ENCODE measurements at regions of chr16 and their contacts with region 1.

Region 1: DNA sequence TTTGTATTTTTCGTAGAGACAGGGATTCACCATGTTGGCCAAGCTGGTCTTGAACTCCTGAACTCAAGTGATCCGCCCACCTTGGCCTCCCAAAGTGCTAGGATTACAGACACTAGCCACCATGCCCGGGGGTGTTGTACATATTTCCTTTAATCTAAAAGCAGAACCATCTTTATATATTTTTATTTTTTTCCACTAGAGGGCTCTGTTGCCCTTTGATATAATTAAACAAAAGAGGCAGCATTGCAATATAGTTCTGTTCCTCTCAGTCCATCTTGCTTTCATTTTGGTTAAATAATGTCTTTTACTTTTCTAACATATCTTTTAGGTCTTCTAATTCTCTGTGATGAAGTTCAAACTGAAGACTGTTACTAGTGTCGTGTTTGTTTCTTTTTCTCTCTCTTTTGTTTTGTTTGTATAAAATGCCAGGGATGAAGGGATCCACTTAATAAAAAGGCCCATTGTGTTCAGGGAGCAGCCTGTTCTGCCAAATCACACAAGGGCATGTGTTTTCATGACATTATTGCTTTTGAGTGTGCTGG is 23.4 kb downstream of the WWOX start:
- DNase-seq: no peak
- H3K4me3 ChIP-seq: peak overlapping the region in 1 of 2 donors; percentile 6
- H3K27ac ChIP-seq: no peak overlapping the region
- H3K4me1 ChIP-seq: peaks cover 16% of the 10 kb centered on the region
- H3K27me3 ChIP-seq: no peaks in the 10 kb centered on the region
- CTCF ChIP-seq: peak; percentile 54 to 69 (median 58)
- POLR2A ChIP-seq: no peak

Region 2: GRCh38 chr16:78235168-78235800 is 112.4 kb after region 1 on chr16:
- intact Hi-C with region 1: loop called (anchors 10 kb)
- DNase-seq: no peak
- H3K4me3 ChIP-seq: no peak overlapping the region
- H3K27ac ChIP-seq: no peak overlapping the region
- H3K4me1 ChIP-seq: peaks cover 21% of the 10 kb centered on the region
- H3K27me3 ChIP-seq: no peaks in the 10 kb centered on the region
- CTCF ChIP-seq: peak; percentile 39 to 65 (median 57)
- POLR2A ChIP-seq: no peak

Region 3: DNA sequence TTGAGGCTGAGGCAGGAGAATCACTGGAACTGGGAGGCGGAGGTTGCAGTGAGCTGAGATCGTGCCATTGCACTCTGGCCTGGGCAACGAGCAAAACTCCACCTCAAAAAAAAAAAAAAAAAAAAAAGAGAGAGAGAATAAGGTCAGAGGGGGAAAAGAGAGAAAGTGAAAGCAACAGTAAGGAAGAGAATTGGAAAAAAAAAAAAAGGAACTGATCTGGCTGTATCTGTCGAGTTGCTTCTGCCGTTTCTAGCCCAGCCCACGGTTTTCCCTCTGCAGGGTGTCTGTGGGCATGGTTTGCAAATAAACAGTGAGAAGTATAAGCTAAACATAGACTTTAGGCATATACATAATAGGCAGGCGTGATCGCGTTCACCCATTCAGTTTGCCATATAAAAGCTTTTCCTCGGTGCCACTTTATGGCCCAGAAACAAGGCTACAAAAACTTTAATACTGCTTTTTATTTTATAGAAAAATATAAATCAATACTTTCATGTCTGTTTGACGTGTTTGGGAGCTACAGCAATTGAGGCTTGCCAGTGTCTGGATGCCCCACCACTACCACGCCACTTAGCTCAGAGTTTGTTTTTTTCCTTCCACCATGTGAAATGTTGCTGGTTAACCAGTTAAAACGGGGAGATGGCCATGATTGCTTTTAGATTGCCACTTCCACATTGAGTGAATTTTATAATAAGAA is 1041.0 kb after region 1 on chr16:
- intact Hi-C with region 1: loop called (anchors 5 kb)
- DNase-seq: no peak
- H3K4me3 ChIP-seq: peak overlapping the region; percentile 1 to 22
- H3K27ac ChIP-seq: no peak overlapping the region
- H3K4me1 ChIP-seq: peaks cover 12% of the 10 kb centered on the region
- H3K27me3 ChIP-seq: no peaks in the 10 kb centered on the region
- CTCF ChIP-seq: no peak
- POLR2A ChIP-seq: no peak